ENCODE measurements at regions of chr1 and their contacts with region 1.

Region 1: GRCh38 chr1:100459358-100460114 is 78.4 kb upstream of the GPR88 start:
- DNase-seq: no peak
- H3K4me3 ChIP-seq: no peak overlapping the region
- H3K27ac ChIP-seq: no peak overlapping the region
- H3K4me1 ChIP-seq: peaks cover 13 to 32% (median 16%) of the 10 kb centered on the region in 4 experiments
- H3K27me3 ChIP-seq: no peaks in the 10 kb centered on the region
- CTCF ChIP-seq: peak; percentile 76 to 87 (median 78)
- EP300 ChIP-seq: no peak
- POLR2A ChIP-seq: no peak
- RAD21 ChIP-seq: peak; percentile 97

Region 2: DNA sequence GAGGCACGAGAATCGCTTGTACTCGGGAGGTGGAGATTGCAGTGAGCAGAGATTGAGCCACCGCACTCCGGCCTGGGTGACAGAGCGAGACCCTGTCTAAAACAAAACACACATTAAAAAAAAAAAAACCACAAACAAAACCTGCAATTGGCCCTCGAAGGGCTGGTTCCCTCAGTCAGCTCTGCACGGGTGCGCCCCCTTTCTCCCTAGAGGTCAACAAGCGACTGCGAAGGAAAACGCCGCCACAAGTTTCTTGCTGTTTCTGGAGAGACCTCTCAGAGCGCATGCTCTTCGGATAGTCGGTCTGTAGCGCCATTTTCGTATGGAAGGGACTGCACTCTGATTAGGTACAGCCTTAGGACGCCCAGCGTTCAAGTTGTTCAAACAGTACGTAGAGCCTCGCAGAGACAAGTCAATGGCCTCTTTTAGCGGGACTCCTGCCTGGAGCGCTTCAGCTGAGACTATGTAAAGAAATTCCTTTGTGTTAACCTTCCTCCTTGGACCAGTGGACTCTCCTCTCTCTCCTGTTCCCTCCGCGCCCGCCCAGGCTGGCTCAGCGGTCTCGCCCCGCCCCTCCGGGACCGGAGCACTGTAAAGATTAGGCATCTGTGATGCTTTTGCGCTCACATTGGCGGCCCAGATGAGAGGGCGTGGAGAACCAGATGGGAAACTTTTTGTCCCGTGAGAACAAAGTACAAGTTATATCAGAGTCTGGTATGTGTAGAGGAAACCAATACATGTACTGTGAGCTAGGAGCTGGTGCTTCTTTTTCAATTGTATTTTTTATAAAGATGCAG is 108.2 kb before region 1 on chr1:
- CTCF ChIA-PET with region 1: interaction called, 14 read pairs
- POLR2A ChIA-PET with region 1: interaction called, 12 read pairs
- DNase-seq: peak; percentile 90 to 93
- H3K4me3 ChIP-seq: peak overlapping the region; percentile 81 to 97 (median 88)
- H3K27ac ChIP-seq: peak overlapping the region; percentile 96
- H3K4me1 ChIP-seq: peaks cover 0 to 7% (median 3%) of the 10 kb centered on the region in 4 experiments; a peak in 5 of 7 replicates
- H3K27me3 ChIP-seq: no peaks in the 10 kb centered on the region
- CTCF ChIP-seq: peak; percentile 56 to 62 (median 60)
- EP300 ChIP-seq: peak in 1 of 2 experiments; percentile 44; a peak in 1 of 3 replicates
- POLR2A ChIP-seq: peak; percentile 85 to 99
- RAD21 ChIP-seq: peak; percentile 54 to 71

Region 3: DNA sequence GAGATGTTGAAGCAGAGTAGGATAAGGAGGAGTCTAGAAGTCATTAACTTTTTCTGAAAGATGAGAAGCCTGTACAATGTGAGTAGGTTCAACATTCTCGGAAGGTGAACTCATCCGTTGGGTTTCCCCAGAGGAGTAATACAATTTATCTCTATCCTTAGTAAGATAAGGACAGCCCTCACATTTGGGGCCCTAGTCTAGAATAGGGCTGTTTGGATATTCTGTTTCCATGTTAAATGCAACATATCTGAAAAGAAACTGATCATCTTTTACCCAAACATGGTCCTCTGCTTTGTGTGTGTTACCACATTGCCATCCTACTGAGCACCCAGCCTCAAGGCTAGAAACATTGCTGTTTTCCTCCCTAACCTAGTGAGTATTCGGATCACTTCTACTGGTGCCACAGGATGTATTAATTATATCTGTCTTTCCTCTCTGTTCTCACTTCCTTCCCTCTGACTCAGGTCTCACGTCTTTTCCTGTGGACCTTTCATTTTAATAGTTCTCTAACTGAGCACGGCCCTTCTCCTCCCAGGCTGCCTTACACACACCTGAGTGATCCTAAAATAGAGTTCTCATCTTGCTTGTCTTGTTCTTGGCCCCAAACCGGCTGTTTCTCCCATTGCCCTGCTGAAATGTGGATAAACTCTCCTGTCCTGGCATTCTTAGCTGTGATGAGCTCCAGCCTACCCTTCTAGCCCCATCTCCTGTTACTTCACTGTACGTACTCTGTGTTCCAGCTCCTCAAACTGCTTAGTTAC is 15.5 kb before region 1 on chr1:
- CTCF ChIA-PET with region 1: interaction called, 15 read pairs
- POLR2A ChIA-PET with region 1: interaction called, 4 read pairs
- DNase-seq: no peak
- H3K4me3 ChIP-seq: no peak overlapping the region
- H3K27ac ChIP-seq: no peak overlapping the region
- H3K4me1 ChIP-seq: peaks cover 0 to 3% (median under 1%) of the 10 kb centered on the region in 4 experiments; a peak in 1 of 7 replicates
- H3K27me3 ChIP-seq: no peaks in the 10 kb centered on the region
- CTCF ChIP-seq: no peak
- EP300 ChIP-seq: no peak
- POLR2A ChIP-seq: no peak
- RAD21 ChIP-seq: peak in 1 of 2 experiments; percentile 8; a peak in 1 of 4 replicates

Region 4: GRCh38 chr1:100530880-100531487 is 71.4 kb after region 1 on chr1:
- CTCF ChIA-PET with region 1: interaction called, 10 read pairs
- POLR2A ChIA-PET with region 1: no interaction called
- DNase-seq: no peak
- H3K4me3 ChIP-seq: no peak overlapping the region
- H3K27ac ChIP-seq: no peak overlapping the region
- H3K4me1 ChIP-seq: peaks cover 0 to 4% (median 2%) of the 10 kb centered on the region in 4 experiments; a peak in 3 of 7 replicates
- H3K27me3 ChIP-seq: peaks cover 0 to 4% (median 0%) of the 10 kb centered on the region in 4 experiments; a peak in 2 of 7 replicates
- CTCF ChIP-seq: no peak
- EP300 ChIP-seq: no peak
- POLR2A ChIP-seq: no peak
- RAD21 ChIP-seq: no peak

Region 5: DNA sequence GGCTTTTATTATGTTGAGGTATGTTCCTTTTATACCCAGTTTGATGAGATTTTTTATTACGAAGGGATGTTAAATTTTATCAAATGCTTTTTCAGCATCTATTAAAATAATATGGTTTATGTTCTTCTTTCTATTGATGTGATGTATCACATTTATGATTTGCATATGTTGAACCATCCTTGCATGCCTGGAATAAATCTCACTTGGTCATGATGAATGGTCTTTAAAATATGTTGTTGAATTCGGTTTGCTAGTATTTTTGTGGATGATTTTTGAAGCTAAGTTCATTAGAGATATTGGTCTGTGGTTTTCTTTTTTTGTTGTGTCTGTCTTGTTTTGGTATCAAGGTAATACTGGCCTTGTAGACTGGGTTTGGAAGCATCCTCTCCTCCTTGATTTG is 92.5 kb after region 1 on chr1:
- CTCF ChIA-PET with region 1: no interaction called
- POLR2A ChIA-PET with region 1: no interaction called
- DNase-seq: no peak
- H3K4me3 ChIP-seq: no peak overlapping the region
- H3K27ac ChIP-seq: no peak overlapping the region
- H3K4me1 ChIP-seq: peaks cover 0 to 2% (median 0%) of the 10 kb centered on the region in 4 experiments; a peak in 2 of 7 replicates
- H3K27me3 ChIP-seq: no peaks in the 10 kb centered on the region
- CTCF ChIP-seq: no peak
- EP300 ChIP-seq: no peak
- POLR2A ChIP-seq: no peak
- RAD21 ChIP-seq: no peak

Region 6: DNA sequence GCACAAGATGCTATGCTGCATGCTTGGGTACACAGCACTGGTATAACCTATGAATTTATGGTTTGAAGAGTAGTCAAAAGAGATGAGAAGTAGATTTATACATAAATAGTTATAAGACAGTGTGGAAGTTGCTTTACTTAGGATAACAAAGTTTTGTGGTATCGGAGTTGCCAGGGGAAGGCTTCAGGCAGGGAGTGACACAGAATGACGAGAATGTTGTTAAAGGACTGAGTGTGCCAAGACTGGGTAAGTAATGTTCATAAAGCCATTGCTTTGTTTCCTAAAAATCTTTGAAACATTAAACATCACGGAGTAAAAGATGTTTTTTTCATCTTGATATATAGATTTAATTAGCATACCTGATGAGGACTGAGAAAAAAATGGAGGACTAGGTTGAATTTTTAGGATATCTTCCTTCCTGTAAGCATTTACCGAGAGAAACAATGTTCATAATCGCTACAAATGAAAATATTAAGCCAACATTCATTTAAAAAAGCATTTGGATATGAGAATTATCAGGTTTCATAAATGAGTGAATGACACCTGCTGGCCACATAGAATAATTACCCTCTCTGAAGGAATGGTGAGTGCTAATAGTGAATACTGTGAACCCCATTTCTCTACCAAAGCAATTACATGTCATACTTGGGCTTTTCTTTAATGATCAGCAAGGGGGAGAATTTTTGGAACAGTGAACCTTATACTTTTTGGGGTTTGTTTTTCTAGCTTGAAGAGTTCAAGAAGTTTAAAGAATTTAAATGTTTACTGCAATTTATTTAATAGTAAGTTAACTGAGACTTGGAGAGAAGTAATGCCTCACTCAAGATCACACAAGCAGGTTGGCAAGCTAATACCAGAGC is 406.7 kb after region 1 on chr1:
- CTCF ChIA-PET with region 1: interaction called, 68 read pairs
- POLR2A ChIA-PET with region 1: no interaction called
- DNase-seq: no peak
- H3K4me3 ChIP-seq: no peak overlapping the region
- H3K27ac ChIP-seq: no peak overlapping the region
- H3K4me1 ChIP-seq: no peaks in the 10 kb centered on the region
- H3K27me3 ChIP-seq: peaks cover 0 to 1% (median 0%) of the 10 kb centered on the region in 4 experiments; a peak in 1 of 7 replicates
- CTCF ChIP-seq: peak in 2 of 3 experiments; percentile 17 to 38; a peak in 2 of 4 replicates
- EP300 ChIP-seq: no peak
- POLR2A ChIP-seq: no peak
- RAD21 ChIP-seq: peak; percentile 49 to 53

Measured in H1 (cell line).